ENCODE measurements at regions of chr13 and their contacts with region 1.

Region 1: DNA sequence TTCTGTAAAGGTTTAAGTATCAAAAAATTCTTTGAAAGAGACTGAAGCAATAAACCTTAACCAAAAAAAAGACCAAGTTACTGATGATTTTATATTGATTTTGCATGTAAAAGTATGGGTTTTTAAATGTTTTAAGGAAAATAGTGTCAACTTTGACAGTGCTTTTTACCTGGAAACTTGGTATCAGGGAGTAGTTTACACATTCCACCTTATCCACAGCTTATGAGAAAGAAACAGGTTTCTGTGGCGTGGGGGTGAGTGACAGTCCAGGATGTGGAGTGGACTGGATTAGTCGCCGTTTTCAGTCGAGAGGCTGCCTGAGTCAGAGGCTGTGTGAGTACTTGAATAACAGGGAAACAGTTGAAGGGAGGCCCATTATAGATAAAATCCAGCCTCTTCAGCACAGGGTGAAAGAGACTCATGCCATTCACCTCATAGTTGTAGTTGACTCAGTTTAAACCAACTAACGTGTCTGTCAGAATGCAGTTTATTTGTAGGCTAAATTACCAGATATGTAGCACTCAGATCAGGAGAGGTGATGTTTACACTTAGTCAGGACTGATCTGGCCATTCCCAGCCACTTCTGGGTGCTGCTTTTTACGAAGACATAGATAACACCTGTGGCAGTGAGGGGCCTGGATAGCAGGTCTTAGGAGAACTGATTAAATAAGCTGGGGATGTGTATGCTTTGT is 595 bp upstream of the GPR183 start:
- DNase-seq: no peak
- ATAC-seq: peak; percentile 25
- H3K4me3 ChIP-seq: peak overlapping the region; percentile 37 to 97 (median 71)
- H3K4me3 Mint-ChIP-seq: peak overlapping the region; percentile 99
- H3K27ac ChIP-seq: peak overlapping the region; percentile 73 to 87
- H3K27ac Mint-ChIP-seq: peak overlapping the region; percentile 95
- H3K4me1 ChIP-seq: peaks cover 49 to 60% of the 10 kb centered on the region in 2 donors
- H3K4me1 Mint-ChIP-seq: peaks cover 69% of the 10 kb centered on the region
- H3K27me3 ChIP-seq: no peaks in the 10 kb centered on the region
- H3K27me3 Mint-ChIP-seq: no peaks in the 10 kb centered on the region
- CTCF ChIP-seq: no peak

Region 2: GRCh38 chr13:99281811-99282263 is 26.0 kb before region 1 on chr13:
- CTCF ChIA-PET with region 1: interaction called, 9 read pairs
- POLR2A ChIA-PET with region 1: interaction called, 6 read pairs
- intact Hi-C with region 1: loop called (anchors 1 kb)
- DNase-seq: no peak
- ATAC-seq: peak; percentile 82
- H3K4me3 ChIP-seq: peak overlapping the region in 3 of 5 experiments; percentile 15 to 32 (median 31)
- H3K4me3 Mint-ChIP-seq: peak overlapping the region; percentile 73
- H3K27ac ChIP-seq: peak overlapping the region; percentile 85 to 89
- H3K27ac Mint-ChIP-seq: peak overlapping the region; percentile 95
- H3K4me1 ChIP-seq: peaks cover 87 to 88% of the 10 kb centered on the region in 2 donors
- H3K4me1 Mint-ChIP-seq: peaks cover 87% of the 10 kb centered on the region
- H3K27me3 ChIP-seq: no peaks in the 10 kb centered on the region
- H3K27me3 Mint-ChIP-seq: no peaks in the 10 kb centered on the region
- CTCF ChIP-seq: no peak

Region 3: DNA sequence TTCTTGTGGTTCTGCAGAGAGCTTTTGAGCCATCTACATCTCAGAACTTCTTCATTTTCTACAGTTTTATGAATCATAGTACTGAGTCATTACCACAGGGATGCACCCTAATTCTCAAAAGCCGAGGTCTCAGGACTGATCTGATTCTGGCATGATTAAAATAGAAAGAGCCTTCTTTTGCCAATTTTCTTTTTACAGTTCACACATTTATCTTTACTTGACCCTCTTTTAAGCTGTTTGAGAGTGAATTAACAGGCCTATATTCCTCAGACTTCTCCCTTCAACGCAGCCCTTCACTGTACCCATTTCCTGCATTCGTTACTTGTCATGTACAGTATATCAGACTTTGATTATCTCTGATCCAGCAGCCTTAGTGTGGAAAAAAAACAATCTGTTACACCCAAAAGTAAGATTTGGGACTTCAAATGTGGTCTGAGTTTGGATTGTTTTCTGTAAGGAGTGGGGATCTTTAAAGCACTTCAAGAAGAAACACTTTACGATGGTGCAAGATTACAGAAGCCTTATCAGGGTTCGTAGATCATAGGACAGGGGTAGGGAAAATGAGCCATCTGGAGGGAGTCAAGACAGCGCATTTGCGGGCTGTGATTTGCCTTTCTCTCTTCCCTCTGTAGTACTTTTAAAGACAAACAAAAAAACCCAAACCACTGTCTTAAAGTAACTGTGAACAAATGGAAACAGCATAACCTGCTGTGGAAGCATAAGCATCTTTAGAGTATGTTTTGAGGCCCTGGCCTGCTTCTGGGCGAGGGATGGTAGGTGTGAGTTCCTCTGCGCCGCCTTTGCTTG is 14.7 kb after region 1 on chr13:
- CTCF ChIA-PET with region 1: interaction called, 6 read pairs
- POLR2A ChIA-PET with region 1: interaction called, 4 read pairs
- intact Hi-C with region 1: loop called (anchors 1 kb)
- DNase-seq: peak; percentile 46
- ATAC-seq: peak; percentile 78
- H3K4me3 ChIP-seq: no peak overlapping the region
- H3K4me3 Mint-ChIP-seq: peak overlapping the region; percentile 77
- H3K27ac ChIP-seq: peak overlapping the region; percentile 56 to 73
- H3K27ac Mint-ChIP-seq: peak overlapping the region; percentile 91
- H3K4me1 ChIP-seq: peaks cover 43 to 49% of the 10 kb centered on the region in 2 donors
- H3K4me1 Mint-ChIP-seq: peaks cover 58% of the 10 kb centered on the region
- H3K27me3 ChIP-seq: no peaks in the 10 kb centered on the region
- H3K27me3 Mint-ChIP-seq: no peaks in the 10 kb centered on the region
- CTCF ChIP-seq: no peak

Region 4: GRCh38 chr13:99331881-99332293 is 24.1 kb after region 1 on chr13:
- CTCF ChIA-PET with region 1: interaction called, 5 read pairs
- POLR2A ChIA-PET with region 1: no interaction called
- intact Hi-C with region 1: loop called (anchors 1 kb)
- DNase-seq: no peak
- ATAC-seq: no peak
- H3K4me3 ChIP-seq: no peak overlapping the region
- H3K4me3 Mint-ChIP-seq: no peak overlapping the region
- H3K27ac ChIP-seq: no peak overlapping the region
- H3K27ac Mint-ChIP-seq: no peak overlapping the region
- H3K4me1 ChIP-seq: peaks cover 13 to 24% of the 10 kb centered on the region in 2 donors
- H3K4me1 Mint-ChIP-seq: peaks cover 44% of the 10 kb centered on the region
- H3K27me3 ChIP-seq: no peaks in the 10 kb centered on the region
- H3K27me3 Mint-ChIP-seq: no peaks in the 10 kb centered on the region
- CTCF ChIP-seq: no peak

Region 5: GRCh38 chr13:99347911-99348451 is 40.2 kb after region 1 on chr13:
- CTCF ChIA-PET with region 1: interaction called, 10 read pairs
- POLR2A ChIA-PET with region 1: interaction called, 3 read pairs
- intact Hi-C with region 1: no loop called
- DNase-seq: peak; percentile 48
- ATAC-seq: peak; percentile 69
- H3K4me3 ChIP-seq: no peak overlapping the region
- H3K4me3 Mint-ChIP-seq: peak overlapping the region; percentile 57
- H3K27ac ChIP-seq: peak overlapping the region; percentile 13 to 17
- H3K27ac Mint-ChIP-seq: peak overlapping the region; percentile 92
- H3K4me1 ChIP-seq: peaks cover 19 to 43% of the 10 kb centered on the region in 2 donors
- H3K4me1 Mint-ChIP-seq: peaks cover 64% of the 10 kb centered on the region
- H3K27me3 ChIP-seq: no peaks in the 10 kb centered on the region
- H3K27me3 Mint-ChIP-seq: no peaks in the 10 kb centered on the region
- CTCF ChIP-seq: no peak

Region 6: GRCh38 chr13:99356158-99357091 is 48.6 kb after region 1 on chr13:
- CTCF ChIA-PET with region 1: interaction called, 10 read pairs
- POLR2A ChIA-PET with region 1: interaction called, 4 read pairs
- intact Hi-C with region 1: loop called (anchors 1 kb)
- DNase-seq: peak; percentile 91
- ATAC-seq: peak; percentile 60
- H3K4me3 ChIP-seq: peak overlapping the region in 4 of 5 experiments; percentile 13 to 47 (median 28)
- H3K4me3 Mint-ChIP-seq: peak overlapping the region; percentile 78
- H3K27ac ChIP-seq: peak overlapping the region; percentile 95 to 97
- H3K27ac Mint-ChIP-seq: peak overlapping the region; percentile 98
- H3K4me1 ChIP-seq: peaks cover 73 to 92% of the 10 kb centered on the region in 2 donors
- H3K4me1 Mint-ChIP-seq: peaks cover 96% of the 10 kb centered on the region
- H3K27me3 ChIP-seq: no peaks in the 10 kb centered on the region
- H3K27me3 Mint-ChIP-seq: no peaks in the 10 kb centered on the region
- CTCF ChIP-seq: no peak